Activated naive CD4-positive, alpha-beta T cell treated with anti-CD3 and anti-CD28 coated beads for 36 hours (primary cell): ENCODE measurements at regions of chr11 and their contacts with region 1.

Region 1: DNA sequence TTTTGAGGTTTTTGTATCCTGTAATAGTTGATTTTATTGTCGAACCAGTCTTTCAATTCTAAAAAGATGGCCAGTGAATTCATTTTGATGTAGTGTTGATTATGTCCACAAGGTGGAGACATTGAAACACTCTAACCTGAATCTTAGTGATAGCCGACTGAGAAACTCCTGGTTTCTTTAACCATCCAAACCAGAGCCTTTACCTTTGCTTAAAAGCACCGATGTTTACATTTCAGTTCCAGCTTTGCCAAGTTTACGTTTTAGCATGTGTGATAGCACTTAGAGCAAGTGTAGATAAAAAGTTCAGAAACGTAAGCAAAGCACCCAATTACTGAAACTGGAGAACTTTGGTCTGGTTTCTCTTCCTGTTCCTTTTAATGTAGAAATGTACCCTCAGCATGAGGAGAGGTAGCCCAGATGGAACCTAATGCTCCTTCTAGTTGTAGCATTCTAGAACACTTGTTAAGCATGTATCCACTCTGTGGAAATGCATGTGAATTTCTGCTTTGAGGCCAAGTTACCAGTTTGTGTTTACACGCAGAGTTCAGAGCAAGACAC is 208.6 kb downstream of the DBX1 start:
- DNase-seq: no peak
- H3K4me3 Mint-ChIP-seq: peak overlapping the region; percentile 19
- H3K27ac Mint-ChIP-seq: no peak overlapping the region
- H3K4me1 Mint-ChIP-seq: peaks cover 5% of the 10 kb centered on the region
- H3K27me3 Mint-ChIP-seq: peaks cover 2% of the 10 kb centered on the region

Region 2: GRCh38 chr11:19970944-19971343 is 19.3 kb after region 1 on chr11:
- CTCF ChIA-PET with region 1: no interaction called
- intact Hi-C with region 1: no loop called
- DNase-seq: peak; percentile 20
- H3K4me3 Mint-ChIP-seq: no peak overlapping the region
- H3K27ac Mint-ChIP-seq: peak overlapping the region; percentile 44
- H3K4me1 Mint-ChIP-seq: peaks cover 6% of the 10 kb centered on the region
- H3K27me3 Mint-ChIP-seq: peaks cover 4% of the 10 kb centered on the region

Region 3: DNA sequence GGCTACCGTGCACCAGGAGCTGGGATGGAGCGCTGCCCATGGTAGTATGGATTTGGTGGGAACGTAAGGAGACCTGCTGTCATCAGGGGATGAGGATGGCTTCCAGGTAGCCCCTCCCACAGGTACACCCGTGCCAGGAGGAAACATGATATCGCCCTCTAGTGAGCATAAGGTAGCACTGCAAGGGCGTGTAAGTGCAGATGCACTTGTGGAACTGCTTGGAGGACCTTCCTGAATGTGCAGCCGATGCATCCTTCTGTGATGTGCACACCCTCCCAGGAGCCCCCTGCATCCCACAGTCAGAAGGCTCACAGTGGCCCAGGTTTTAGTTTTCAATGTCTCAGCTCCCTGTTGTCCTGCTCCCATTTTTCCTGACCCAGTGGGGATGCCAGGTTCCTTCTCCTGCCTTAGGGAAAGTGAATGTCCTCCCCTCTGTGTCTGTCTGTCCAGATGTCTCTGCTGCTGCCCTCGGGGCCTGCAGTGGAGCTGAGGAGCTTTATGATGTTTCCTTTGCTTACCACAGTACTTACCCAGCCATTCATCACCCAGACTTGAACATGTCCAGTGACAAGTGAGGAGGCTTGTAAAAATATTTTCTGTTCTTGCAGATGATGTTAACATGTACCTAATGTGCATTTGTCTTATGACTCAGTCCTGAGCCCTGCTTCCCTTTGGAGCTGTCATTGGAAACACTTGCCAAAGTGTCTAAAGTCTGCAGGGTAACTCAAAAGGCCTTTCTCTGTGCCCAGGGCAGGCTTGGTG is 159.5 kb after region 1 on chr11:
- CTCF ChIA-PET with region 1: interaction called, 10 read pairs
- intact Hi-C with region 1: loop called (anchors 1 kb)
- DNase-seq: peak; percentile 68
- H3K4me3 Mint-ChIP-seq: no peak overlapping the region
- H3K27ac Mint-ChIP-seq: no peak overlapping the region
- H3K4me1 Mint-ChIP-seq: no peaks in the 10 kb centered on the region
- H3K27me3 Mint-ChIP-seq: peaks cover 2% of the 10 kb centered on the region

Region 4: DNA sequence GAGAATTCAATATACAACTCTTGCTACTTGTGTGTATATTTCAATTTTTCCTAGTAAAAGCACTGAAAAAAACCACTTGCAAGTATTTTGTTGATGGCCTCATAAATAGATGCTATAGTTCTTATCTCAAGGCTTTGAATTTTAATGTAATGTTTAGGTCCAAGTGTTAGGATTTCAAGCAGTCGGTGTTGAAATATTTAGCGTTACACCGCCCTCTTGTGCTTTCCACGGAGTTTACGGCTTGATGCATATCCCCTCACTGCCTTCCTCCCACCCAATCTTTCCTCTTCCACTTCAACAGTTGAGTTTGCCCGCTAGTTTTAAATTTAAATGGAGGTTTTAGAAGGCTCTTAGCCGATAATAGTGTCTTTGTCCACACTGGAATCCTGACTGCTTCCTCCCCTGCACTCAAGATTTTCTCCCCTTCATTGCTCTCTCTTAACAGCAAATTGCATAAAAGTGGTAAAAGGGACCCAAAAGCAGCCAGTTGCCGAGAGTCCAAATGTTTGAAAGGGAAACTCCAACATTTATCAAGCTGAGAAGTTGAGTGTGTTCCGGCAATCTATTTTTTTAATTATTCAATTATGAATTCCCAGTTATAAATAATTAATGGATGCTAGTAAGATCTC is 386.0 kb after region 1 on chr11:
- CTCF ChIA-PET with region 1: no interaction called
- intact Hi-C with region 1: loop called (anchors 5 kb)
- DNase-seq: peak; percentile 35
- H3K4me3 Mint-ChIP-seq: no peak overlapping the region
- H3K27ac Mint-ChIP-seq: no peak overlapping the region
- H3K4me1 Mint-ChIP-seq: no peaks in the 10 kb centered on the region
- H3K27me3 Mint-ChIP-seq: peaks cover 48% of the 10 kb centered on the region